ENCODE measurements at regions of chr1 and their contacts with region 1.

Region 1: GRCh38 chr1:220690140-220691025 is at the start of gene C1orf115:
- DNase-seq: peak; percentile 44 to 96
- H3K4me3 ChIP-seq: peak within 1 kb of the TSS; percentile 46 to 73 (median 57)
- H3K27ac ChIP-seq: no peak within 1 kb of the TSS
- H3K4me1 ChIP-seq: peaks cover 0 to 3% (median 1%) of the 10 kb centered on the region in 4 experiments; a peak in 3 of 7 replicates
- H3K27me3 ChIP-seq: peaks cover 0 to 22% (median 14%) of the 10 kb centered on the region in 4 experiments; a peak in 6 of 7 replicates
- CTCF ChIP-seq: peak; percentile 88 to 95 (median 91)
- EP300 ChIP-seq: no peak
- POLR2A ChIP-seq: peak in 1 of 2 experiments; percentile 58; a peak in 2 of 3 replicates
- RAD21 ChIP-seq: peak; percentile 62 to 71
- total RNA-seq, gene C1orf115: 5.6 and 6.4 TPM in 2 replicates

Region 2: GRCh38 chr1:220680085-220680687 is 10.2 kb before region 1 on chr1:
- CTCF ChIA-PET with region 1: interaction called, 11 read pairs
- POLR2A ChIA-PET with region 1: no interaction called
- DNase-seq: no peak
- H3K4me3 ChIP-seq: no peak overlapping the region
- H3K27ac ChIP-seq: no peak overlapping the region
- H3K4me1 ChIP-seq: no peaks in the 10 kb centered on the region
- H3K27me3 ChIP-seq: no peaks in the 10 kb centered on the region
- CTCF ChIP-seq: peak; percentile 53 to 79 (median 73)
- EP300 ChIP-seq: no peak
- POLR2A ChIP-seq: no peak
- RAD21 ChIP-seq: peak; percentile 81 to 85

Region 3: DNA sequence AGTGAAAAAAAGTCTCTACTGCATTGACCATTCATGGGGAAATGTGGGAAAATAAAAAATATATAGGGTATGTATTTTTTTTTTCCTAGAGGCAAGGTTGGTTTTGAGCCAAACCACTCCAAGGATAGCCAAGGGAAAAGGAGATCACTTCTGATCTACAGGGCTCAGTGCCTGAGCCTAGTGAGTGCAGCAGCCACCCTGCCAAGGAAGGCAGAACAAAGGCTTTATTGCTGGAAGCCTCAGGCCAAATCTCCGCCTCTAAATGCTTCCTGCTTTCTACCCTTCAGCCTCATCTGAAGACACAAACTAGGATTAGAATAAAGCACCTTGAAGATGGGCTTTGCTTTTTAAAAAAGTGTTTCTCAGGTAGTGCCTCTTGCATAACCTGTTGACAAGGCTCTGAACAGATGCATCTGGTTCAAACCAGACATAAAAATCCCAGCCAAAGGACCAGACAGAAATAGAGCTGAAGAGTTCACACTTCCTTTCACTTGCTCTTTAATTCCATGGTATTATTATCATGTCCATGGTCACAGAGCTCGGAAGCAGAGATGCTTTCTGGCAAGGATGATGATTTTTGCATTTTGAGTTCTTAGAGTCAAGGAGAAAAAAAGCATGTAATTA is 10.3 kb after region 1 on chr1:
- CTCF ChIA-PET with region 1: interaction called, 26 read pairs
- POLR2A ChIA-PET with region 1: interaction called, 4 read pairs
- DNase-seq: no peak
- H3K4me3 ChIP-seq: no peak overlapping the region
- H3K27ac ChIP-seq: no peak overlapping the region
- H3K4me1 ChIP-seq: peaks cover 0 to 8% (median 3%) of the 10 kb centered on the region in 4 experiments; a peak in 4 of 7 replicates
- H3K27me3 ChIP-seq: no peaks in the 10 kb centered on the region
- CTCF ChIP-seq: no peak
- EP300 ChIP-seq: no peak
- POLR2A ChIP-seq: no peak
- RAD21 ChIP-seq: no peak

Measured in H1 (cell line).